ENCODE measurements at regions of chr19 and their contacts with region 1.

Region 1: DNA sequence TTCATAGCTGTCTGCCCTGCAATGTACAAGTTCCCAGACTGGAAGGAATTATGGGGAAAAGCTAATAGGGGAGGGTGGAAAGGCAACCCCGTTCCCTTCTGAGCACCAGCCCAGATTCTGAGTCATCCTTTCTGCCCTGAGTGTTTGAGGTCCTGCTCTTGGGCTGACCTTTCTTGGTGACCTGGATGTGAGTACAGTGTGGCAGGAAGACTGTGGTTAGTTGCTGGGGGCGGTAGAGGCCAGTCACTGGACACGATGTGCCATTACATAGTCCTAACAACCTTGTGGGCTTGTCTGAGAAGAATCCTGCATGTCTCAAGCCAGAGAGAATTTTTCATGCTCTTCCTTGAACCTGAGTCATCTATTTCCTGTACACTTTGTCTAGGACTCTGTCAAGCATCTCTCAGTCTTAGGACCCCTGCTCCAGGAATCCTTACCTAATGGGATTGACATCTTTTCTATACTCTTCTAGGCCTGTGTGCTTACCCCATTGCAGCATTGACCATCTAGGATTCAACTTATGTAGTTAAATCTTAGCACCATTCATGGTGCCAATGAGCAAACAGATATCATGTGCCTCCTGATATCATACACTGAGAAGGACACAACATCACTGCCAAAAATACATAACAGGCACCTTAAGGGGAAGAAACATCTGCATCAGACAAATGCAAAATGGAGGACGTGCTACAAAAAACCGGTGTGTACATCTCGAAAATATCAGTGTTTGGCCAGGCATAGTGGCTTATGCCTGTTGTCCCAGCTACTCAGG is 8.1 kb upstream of the ANGPTL4 start:
- DNase-seq: peak; percentile 75
- H3K4me3 ChIP-seq: no peak overlapping the region
- CTCF ChIP-seq: no peak

Region 2: GRCh38 chr19:8161135-8161646 is 194.6 kb before region 1 on chr19:
- CTCF ChIA-PET with region 1: no interaction called
- POLR2A ChIA-PET with region 1: no interaction called
- DNase-seq: no peak
- H3K4me3 ChIP-seq: no peak overlapping the region
- CTCF ChIP-seq: no peak

Region 3: DNA sequence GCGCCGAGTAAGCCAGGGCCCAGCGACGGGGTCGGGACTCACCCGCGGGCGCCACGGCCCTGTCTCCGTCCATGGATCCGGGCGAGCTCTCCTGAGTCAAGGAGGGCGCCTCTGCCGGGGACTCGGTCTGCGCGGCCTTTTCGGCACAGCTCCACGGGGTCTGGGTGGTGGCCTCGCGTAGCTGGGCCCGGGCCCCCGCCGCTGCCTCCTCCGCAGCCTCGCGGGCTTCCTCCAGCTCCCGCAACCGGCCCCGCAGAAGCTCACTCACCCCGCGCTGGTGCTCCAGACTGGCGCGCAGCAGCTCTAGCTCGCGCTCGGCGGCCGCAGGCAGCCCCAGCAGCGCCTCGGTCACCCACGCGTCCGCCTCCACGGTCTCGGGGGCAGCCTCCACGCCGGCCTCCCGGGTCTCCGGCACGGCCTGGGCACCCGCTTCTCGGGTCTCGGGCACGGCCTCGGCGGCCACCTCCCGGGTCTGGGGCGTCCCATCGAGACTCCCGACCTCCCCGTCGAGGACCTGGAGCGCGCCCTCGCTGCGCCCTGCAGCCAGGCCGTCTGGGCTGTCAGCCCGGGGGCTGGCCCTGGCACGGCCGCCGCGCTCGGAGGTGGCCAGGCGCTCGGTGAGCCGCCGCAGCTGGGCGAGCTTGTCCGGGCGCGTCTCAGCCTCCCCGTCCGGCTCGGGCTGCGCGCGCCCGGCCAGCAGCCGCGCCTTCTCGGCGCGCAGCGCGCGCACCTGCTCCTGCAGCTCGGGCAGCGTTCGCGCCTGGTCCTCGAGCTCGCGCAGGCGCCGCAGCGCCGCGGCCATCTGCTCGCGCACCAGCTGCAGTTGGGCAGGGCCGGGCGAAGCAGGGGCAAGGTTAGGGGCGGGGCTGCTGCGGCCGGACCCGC is 21.1 kb before region 1 on chr19:
- CTCF ChIA-PET with region 1: interaction called, 14 read pairs
- POLR2A ChIA-PET with region 1: no interaction called
- DNase-seq: no peak
- H3K4me3 ChIP-seq: no peak overlapping the region
- CTCF ChIP-seq: no peak

Region 4: DNA sequence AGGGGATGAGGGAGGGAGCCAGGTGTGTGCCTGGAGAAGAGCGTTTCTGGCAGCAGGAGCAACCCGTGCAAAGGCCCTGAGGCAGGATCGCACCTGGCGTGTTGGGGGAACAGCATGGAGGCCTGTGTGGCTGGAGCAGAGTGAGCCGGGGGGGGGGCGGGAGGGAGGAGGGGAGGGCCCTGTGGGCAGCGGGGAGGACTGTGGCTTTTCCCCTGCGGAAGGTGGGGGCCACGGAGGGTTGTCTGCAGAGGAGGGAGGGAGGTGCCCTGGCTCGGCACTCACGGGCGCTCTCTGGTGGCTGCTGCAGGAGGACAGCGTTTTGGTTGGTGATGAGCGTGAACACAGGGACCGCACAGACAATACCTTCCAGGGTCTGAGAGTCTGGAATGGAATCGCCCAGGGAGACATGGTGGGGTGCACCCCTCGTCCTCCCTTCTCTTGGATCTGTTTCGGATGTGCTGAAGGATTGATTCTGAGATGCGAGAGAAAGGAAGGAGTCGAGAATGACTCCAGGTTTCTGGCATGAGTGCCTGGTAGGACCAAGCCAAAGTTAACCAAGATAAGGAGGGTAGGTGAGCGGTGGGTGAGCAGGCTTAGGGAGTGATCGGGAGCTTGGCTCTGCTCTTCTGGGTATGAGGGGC is 40.9 kb after region 1 on chr19:
- CTCF ChIA-PET with region 1: interaction called, 121 read pairs
- POLR2A ChIA-PET with region 1: interaction called, 3 read pairs
- DNase-seq: no peak
- H3K4me3 ChIP-seq: no peak overlapping the region
- CTCF ChIP-seq: peak; percentile 86

Region 5: GRCh38 chr19:8423817-8424223 is 68.0 kb after region 1 on chr19:
- CTCF ChIA-PET with region 1: interaction called, 17 read pairs
- POLR2A ChIA-PET with region 1: interaction called, 3 read pairs
- DNase-seq: peak; percentile 65
- H3K4me3 ChIP-seq: no peak overlapping the region
- CTCF ChIP-seq: no peak

Region 6: DNA sequence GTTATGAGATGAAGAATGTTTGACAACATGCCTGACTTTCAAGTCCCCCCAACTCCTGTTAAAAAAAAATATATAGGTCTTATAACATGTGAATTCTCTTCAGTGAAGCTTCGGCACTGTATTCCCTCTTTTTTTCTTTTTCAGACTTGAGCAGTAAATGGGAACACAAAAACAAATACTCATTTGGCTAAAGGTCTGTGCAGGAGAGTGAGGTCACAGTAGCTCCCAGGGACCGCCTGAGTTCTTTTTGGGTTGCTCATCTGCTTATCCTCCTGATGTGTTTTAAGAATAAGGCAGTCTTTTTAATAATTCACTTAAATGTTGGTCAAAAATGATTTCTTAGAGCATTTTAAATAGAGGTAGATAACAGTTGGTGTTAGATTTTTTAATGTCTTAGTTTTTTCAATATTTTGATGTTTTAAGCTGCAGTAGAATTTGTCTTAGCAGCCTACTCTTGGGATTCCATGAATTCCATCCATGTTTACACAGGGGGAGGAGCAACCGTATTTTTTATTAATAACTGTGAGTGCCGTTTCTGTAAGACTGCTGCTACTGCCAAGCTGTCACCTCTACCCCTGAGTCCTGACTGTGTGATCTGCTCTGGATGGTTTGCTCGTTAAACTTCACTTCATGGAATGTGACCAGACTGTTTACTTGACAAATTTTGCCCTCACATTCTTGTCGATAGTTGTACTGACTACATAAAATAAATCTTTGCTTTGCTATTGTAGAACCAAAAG is 103.9 kb after region 1 on chr19:
- CTCF ChIA-PET with region 1: interaction called, 18 read pairs
- POLR2A ChIA-PET with region 1: no interaction called
- DNase-seq: no peak
- H3K4me3 ChIP-seq: no peak overlapping the region; the same call in 1 of the 2 replicates
- CTCF ChIP-seq: no peak

Region 7: GRCh38 chr19:8505680-8506401 is 150.0 kb after region 1 on chr19:
- CTCF ChIA-PET with region 1: interaction called, 86 read pairs
- POLR2A ChIA-PET with region 1: no interaction called
- DNase-seq: no peak
- H3K4me3 ChIP-seq: peak overlapping the region; percentile 64
- CTCF ChIP-seq: peak; percentile 87

Region 8: DNA sequence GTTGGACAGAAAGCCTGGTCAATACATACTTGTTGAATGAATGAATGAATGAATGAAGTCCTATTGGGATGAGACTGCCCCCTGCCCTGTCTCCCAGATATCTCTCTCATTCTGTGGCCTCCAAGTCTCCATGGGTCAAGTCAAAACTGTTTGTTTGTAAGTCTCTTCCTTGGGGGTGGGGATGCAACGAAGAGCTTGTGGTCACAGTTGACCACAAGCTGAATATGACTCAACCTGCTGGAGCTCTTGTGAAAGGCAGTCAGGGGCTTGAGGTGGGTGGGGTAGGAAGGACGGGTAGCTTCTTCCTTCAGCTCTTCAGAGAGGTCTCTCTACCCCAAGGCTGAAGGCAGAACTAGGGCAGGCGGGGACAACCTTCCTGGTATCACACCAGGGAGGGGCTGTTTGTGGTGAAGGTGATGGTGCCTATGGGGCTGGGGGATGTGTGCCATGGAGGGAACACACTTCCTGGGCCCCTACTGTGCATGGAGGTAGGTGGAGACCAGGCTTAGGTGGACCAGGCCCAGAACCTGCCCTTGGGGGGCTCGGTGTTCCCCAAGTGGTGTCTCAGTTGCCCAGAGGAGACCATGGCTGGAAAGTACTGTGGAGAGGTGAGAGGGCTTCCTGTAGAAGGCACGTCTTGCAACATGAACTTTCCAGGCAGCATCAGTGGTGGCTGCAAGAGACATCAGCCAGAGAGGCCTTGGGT is 213.4 kb after region 1 on chr19:
- CTCF ChIA-PET with region 1: interaction called, 10 read pairs
- POLR2A ChIA-PET with region 1: no interaction called
- DNase-seq: peak; percentile 85
- H3K4me3 ChIP-seq: no peak overlapping the region
- CTCF ChIP-seq: no peak